Left ventricle myocardium superior (tissue), 1 donor: ENCODE measurements at regions of chr4 and their contacts with region 1.

Region 1: GRCh38 chr4:102449751-102450352 is 51.3 kb upstream of the NFKB1 start:
- DNase-seq: no peak
- ATAC-seq: peak; percentile 63

Region 2: DNA sequence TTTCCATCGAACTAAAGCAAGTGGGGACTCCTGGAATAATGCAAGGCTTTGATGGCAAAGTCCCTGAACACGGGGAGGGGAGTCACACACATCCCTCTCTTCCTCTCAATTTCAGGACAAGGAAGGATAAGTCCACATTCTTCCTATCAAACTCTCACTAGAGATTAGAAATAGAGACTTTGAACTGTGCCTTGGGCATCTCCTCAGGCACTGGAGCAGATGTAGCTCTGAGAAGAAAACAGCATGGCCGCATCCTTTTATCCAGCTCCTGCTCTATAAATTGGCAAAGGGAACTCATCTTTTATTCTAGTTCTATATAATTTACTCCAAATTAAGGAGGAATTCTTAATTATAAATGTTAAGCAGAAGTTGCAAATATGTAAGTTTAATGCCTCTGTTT is 64.2 kb before region 1 on chr4:
- intact Hi-C with region 1: no loop called
- DNase-seq: no peak
- ATAC-seq: no peak

Region 3: DNA sequence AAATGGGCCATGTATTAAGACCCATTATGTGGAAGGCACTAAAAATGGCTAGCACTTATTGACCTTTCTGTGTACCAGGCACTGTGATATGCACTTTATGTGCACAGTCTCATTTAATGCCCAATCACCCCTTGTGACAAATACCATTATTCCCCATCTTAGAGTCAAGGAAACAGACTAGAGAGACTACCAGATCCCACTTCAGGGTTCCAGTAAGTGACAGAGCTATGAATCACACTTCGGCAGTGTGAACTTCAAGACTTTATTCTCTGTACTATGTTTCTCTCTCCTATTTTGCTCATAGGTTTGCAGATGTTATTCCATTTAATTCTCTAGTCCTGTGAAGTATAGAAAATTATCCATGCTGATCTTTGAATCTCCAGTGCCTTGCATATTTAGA is 158.3 kb after region 1 on chr4:
- intact Hi-C with region 1: loop called (anchors 5 kb)
- DNase-seq: no peak
- ATAC-seq: no peak